Left lung (tissue), 14 donors: ENCODE measurements at regions of chr3 and their contacts with region 1.

Region 1: DNA sequence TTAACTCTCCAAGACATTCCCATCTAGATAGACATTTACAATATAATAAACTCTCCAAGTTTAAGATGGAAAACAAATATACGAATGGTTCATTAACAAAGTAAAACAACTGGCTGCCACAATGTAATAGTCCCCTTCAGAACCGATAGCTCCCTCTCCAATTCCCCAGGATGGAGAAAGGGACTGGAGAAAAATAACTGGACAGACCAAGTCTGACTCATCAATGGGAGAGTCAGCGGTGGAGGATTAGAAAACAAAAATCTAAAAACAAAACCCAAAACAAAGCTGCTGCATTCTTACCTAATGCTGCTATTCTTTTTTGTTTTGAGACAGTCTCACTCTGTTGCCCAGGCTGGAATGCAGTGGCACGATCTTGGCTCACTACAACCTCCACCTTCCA is 468.1 kb downstream of the SHQ1 start:
- DNase-seq: no peak
- ATAC-seq: no peak
- H3K4me3 ChIP-seq: no peak overlapping the region
- H3K27ac ChIP-seq: no peak overlapping the region
- H3K4me1 ChIP-seq: peaks cover 6 to 77% of the 10 kb centered on the region in 2 donors
- H3K27me3 ChIP-seq: no peaks in the 10 kb centered on the region
- CTCF ChIP-seq: no peak

Region 2: GRCh38 chr3:72447059-72447946 is 67.1 kb after region 1 on chr3:
- intact Hi-C with region 1: loop called in 1 of 2 experiments (anchors 10 kb)
- DNase-seq: peak; percentile 90 to 97 (median 94)
- ATAC-seq: peak; percentile 96
- H3K4me3 ChIP-seq: peak overlapping the region; percentile 80 to 81
- H3K27ac ChIP-seq: peak overlapping the region; percentile 91
- H3K4me1 ChIP-seq: peaks cover 12 to 42% of the 10 kb centered on the region in 2 donors
- H3K27me3 ChIP-seq: no peaks in the 10 kb centered on the region
- CTCF ChIP-seq: no peak